ENCODE measurements at regions of chr2 and their contacts with region 1.

Region 1: DNA sequence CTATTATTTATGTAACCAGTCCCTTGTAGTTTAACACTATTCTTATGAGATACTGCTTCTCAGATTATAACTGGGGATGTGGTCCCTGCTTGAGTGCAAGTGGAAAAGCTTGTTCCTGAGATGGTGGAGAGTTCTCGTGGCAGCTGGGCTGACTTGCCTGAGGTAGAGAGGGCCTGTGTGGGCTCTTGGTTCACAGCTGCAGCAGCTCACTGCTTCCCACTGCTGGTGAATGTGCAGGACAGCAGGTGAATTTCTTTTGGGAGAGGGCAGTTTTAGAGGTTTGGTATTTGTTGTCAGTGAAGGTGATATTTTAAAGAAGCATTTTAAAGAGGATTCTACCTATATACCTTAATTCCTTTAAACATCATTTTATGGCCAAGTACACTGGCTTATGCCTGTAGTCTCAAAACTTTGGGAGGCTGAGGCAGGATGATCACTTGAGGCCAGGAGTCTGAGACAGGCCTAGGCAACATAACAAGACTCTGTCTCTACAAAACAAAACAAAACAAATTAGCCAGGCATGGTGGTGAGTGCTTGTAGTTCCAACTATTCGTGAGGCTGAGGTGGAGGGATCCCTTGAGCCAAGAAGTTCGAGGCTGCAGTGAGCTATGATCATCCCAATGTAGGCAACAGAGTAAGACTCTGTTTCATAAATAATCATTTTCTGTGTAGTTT is 94.8 kb downstream of the MTA3 start:
- DNase-seq: peak; percentile 80
- H3K4me3 ChIP-seq: no peak overlapping the region
- H3K27ac ChIP-seq: no peak overlapping the region
- H3K4me1 ChIP-seq: peaks cover 0 to 13% (median 5%) of the 10 kb centered on the region in 4 donors
- H3K27me3 ChIP-seq: no peaks in the 10 kb centered on the region
- CTCF ChIP-seq: peak; percentile 79 to 97 (median 96)
- EP300 ChIP-seq: no peak
- POLR2A ChIP-seq: no peak

Region 2: DNA sequence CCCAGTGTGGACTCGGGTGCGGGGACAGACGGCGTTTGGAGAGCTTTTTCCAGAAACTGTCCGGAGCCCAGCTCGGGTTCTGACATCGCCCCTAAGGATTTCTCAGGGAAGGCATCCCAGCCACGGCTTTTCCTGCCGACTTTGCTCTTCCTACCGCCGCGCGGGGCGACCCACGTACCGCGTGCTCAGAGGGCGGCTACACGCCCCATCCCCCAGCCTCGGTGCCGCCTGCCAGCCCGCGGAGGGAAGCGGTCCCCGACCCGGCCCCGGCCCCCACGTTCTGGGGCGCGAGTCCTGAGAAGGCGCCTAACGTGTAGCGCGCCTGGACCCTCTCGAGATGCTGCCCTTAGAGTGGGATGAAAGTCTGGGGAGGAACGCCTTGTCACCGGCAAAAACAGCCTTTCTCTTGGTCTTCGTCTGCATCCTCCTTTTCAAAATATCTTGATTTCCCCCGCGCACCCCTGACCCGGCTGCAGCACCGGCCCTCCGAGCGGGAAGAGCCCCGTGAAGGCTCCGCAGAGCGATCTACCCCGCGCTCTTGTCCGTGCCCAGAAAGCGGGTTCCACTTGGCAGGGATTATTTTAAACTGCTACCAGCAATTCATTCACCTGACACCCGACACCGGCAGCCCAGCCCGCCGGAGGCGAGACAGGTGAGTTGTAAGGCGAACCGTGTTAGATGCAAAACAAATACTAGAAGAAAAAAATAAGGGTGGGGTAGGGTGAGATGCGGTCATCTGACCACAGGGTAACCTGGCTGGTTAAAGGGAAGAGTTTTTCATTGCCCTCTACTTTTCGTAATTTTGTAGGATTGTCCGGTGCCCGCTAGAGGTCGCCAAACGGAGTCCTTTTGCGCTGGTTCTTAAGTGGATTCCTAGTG is 168.6 kb before region 1 on chr2:
- intact Hi-C with region 1: loop called (anchors 5 kb)
- DNase-seq: peak; percentile 80
- H3K4me3 ChIP-seq: peak overlapping the region; percentile 26 to 59 (median 54)
- H3K27ac ChIP-seq: peak overlapping the region in 2 of 4 donors; percentile 10 to 51
- H3K4me1 ChIP-seq: peaks cover 0 to 25% (median 22%) of the 10 kb centered on the region in 4 donors
- H3K27me3 ChIP-seq: peaks cover 13 to 53% (median 16%) of the 10 kb centered on the region in 3 donors
- CTCF ChIP-seq: peak; percentile 49 to 85 (median 74)
- EP300 ChIP-seq: no peak
- POLR2A ChIP-seq: no peak

Region 3: DNA sequence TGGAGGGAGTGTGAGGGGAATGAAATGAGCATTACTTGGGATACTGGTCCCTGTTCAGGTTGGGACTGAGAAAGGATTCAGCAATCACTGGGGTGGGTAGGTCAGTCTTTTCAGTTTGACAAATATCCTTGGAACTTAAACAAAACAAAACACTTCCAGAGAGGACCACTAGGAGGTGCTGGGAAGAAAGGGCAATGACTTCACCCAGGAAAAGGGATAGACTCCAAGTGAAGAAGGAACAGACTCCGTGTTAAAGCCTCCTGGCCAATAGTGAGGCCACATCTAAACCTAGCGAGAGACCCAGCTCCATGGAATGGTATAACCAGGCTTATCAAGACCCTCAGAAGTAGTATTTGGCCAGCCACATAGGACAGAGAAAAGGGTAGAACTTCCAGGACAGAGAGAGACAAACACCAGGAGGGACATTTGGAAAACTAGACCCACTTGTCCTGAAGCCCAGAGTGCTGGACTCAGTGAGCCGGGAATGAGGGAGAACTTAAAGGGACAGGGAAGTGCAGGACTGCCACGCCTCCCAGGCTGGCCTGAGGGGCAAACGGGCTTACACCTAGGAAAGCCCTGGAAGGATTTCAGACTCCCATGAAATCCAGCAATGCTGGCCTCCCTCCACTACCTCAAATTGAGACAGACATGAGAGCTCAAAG is 149.9 kb before region 1 on chr2:
- intact Hi-C with region 1: loop called (anchors 2 kb)
- DNase-seq: no peak
- H3K4me3 ChIP-seq: no peak overlapping the region
- H3K27ac ChIP-seq: no peak overlapping the region
- H3K4me1 ChIP-seq: no peaks in the 10 kb centered on the region
- H3K27me3 ChIP-seq: no peaks in the 10 kb centered on the region
- CTCF ChIP-seq: peak; percentile 22 to 69 (median 60)
- EP300 ChIP-seq: no peak
- POLR2A ChIP-seq: no peak

Measured in sigmoid colon (tissue), 7 donors.